Posterior cingulate gyrus (tissue), 11 donors: ENCODE measurements at regions of chr10 and their contacts with region 1.

Region 1: GRCh38 chr10:6920072-6921019 is 340.3 kb upstream of the PRKCQ start:
- DNase-seq: peak; percentile 63 to 97 (median 84)

Region 2: GRCh38 chr10:6565588-6565987 is 354.8 kb before region 1 on chr10:
- intact Hi-C with region 1: no loop called
- DNase-seq: no peak

Region 3: GRCh38 chr10:6688661-6689435 is 231.5 kb before region 1 on chr10:
- intact Hi-C with region 1: loop called (anchors 10 kb)
- DNase-seq: no peak

Region 4: DNA sequence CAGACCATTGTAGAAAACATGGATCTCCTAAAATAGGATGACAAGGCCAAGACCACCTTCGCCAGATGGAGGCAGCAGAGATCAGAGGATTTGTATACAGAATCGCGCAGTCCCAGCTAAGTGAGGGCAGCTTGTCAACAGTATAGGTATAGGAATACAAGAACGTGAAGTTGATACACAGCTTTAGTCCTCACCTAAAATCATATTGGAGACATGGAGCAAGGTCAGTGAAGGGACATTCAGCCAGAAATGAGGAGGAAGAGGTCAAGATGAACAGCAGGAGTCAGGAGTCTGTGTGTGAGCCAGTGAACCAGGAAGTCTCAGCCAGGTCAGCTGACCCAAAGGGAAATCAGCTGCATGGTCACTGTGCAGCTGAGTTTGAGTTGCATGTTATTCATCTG is 76.9 kb before region 1 on chr10:
- intact Hi-C with region 1: loop called (anchors 10 kb)
- DNase-seq: peak in 4 of 10 donors; percentile 39 to 88 (median 66)

Region 5: GRCh38 chr10:7015457-7015856 is 95.1 kb after region 1 on chr10:
- intact Hi-C with region 1: no loop called
- DNase-seq: no peak

Region 6: GRCh38 chr10:7121154-7121810 is 200.9 kb after region 1 on chr10:
- intact Hi-C with region 1: loop called (anchors 10 kb)
- DNase-seq: peak in 7 of 10 donors; percentile 37 to 88 (median 68)

Region 7: DNA sequence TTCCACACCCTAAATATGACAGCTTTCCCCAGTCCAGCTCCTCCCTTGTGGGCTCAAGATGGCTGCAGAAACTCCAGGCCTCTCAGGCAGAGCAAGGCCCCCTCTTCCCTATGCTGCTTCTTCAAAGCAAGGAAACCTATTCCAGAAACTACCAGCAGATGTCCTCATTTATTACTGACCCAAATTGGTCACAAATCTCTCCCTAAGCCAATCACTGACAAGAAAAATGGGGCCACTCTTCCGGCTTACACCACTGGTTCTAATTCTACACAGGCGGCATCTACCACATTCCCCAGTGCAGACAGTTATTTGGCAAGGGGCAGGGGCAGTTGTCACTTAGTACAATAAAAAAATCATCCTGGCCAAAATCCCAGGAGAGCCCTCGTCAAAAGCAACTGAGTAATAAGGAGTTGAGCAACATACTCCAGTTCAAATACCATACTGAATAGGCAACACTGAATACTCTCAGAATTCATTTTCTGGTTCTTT is 340.1 kb after region 1 on chr10:
- intact Hi-C with region 1: loop called (anchors 2 kb)
- DNase-seq: peak in 2 of 10 donors; percentile 24 to 25

Region 8: GRCh38 chr10:7410862-7411670 is 490.7 kb after region 1 on chr10 and contains the start of gene SFMBT2:
- intact Hi-C with region 1: loop called (anchors 2 kb)
- DNase-seq: peak in 8 of 10 donors; percentile 49 to 95 (median 61)